ENCODE measurements at regions of chr19 and their contacts with region 1.

Region 1: GRCh38 chr19:56333505-56333904 is 18.9 kb upstream of the ZSCAN5A start:
- DNase-seq: peak; percentile 18
- H3K4me3 ChIP-seq: no peak overlapping the region
- H3K27ac ChIP-seq: no peak overlapping the region
- H3K27me3 ChIP-seq: no peaks in the 10 kb centered on the region
- CTCF ChIP-seq: peak; percentile 83

Region 2: DNA sequence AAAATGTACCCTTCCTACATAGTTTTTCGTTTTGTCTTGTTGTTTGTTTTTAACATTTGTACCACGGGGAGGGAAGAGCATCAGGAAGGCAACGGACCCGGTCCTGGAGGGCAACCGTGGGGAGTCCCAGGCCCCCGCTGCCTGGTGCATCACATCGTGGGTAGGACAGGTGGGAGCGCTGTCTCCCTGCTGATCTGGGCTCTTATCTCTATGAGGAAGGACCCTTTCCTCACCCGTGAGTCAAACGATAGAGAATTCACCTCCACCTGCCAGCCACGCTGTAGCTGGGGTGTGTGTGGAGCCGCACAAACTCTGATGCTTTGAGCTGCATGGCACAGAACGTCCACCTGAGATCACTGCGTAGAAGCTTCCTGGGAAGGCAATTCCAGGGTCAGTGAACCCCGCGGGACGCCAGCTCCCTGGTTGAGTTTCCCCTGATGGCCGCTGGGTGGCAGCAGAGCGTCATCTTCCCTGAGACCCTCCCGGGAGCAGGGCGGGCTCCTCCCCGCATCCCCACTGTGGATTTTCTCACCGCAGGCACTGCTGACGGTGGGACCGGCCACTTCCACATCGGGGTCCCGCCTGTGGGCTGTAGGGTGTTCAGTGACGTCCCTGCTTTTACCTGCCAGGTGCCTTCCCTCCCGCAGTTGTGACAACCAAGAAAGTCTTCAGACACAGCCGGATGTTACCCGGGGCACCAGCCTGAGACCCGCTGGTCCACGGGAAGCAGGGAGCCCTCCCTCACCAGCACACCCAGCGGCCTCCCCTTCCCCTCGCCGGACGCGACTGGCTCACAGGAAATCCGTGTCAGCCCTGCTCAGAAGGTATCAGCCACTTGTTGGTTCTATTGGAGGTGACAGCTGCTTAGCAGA is 267.1 kb before region 1 on chr19:
- CTCF ChIA-PET with region 1: interaction called, 151 read pairs
- POLR2A ChIA-PET with region 1: no interaction called
- DNase-seq: peak; percentile 4
- H3K4me3 ChIP-seq: peak overlapping the region; percentile 39
- H3K27ac ChIP-seq: no peak overlapping the region
- H3K27me3 ChIP-seq: no peaks in the 10 kb centered on the region
- CTCF ChIP-seq: peak; percentile 83

Region 3: GRCh38 chr19:56170261-56170660 is 163.2 kb before region 1 on chr19:
- CTCF ChIA-PET with region 1: interaction called, 12 read pairs
- POLR2A ChIA-PET with region 1: no interaction called
- DNase-seq: no peak
- H3K4me3 ChIP-seq: no peak overlapping the region
- H3K27ac ChIP-seq: no peak overlapping the region
- H3K27me3 ChIP-seq: peaks cover 3% of the 10 kb centered on the region
- CTCF ChIP-seq: no peak

Region 4: DNA sequence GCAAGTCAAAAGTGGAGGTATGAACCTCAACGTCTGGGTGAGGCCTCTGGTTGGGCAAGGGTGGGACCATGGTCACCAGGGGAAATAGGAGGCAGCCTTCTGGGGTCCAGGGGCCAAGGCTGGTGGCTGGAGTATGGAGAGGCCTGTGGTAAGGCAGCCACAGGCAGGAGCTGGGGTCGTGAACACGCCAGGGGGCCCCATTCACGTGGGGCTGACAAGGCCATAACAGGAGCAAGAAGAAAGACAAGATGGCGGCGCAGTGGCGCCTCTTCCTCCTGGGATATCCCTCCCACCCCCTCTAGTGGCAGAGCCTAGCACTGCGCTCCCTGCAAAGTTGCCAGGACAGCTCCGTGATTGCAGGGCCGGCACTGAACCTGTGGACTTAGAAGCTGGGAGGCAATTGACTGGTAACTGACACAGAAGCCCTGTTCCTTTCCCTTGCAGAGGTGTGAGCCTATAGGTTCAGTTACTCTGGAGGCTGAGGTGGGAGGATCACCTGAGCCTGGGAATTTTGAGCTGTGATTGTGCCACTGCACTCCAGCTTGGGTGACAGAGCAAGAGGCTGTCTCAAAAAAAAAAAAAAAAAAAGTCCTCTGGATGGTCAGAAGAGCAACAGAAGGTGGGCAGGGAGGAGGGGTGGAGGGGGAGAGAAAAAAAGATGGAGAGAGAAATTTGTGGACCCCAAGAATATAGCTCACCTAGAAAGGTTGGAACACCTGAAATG is 80.6 kb before region 1 on chr19:
- CTCF ChIA-PET with region 1: interaction called, 396 read pairs
- POLR2A ChIA-PET with region 1: interaction called, 5 read pairs
- DNase-seq: peak; percentile 33
- H3K4me3 ChIP-seq: no peak overlapping the region
- H3K27ac ChIP-seq: no peak overlapping the region
- H3K27me3 ChIP-seq: no peaks in the 10 kb centered on the region
- CTCF ChIP-seq: peak; percentile 86

Region 5: GRCh38 chr19:56273563-56274117 is 59.9 kb before region 1 on chr19:
- CTCF ChIA-PET with region 1: interaction called, 19 read pairs
- POLR2A ChIA-PET with region 1: no interaction called
- DNase-seq: no peak
- H3K4me3 ChIP-seq: no peak overlapping the region
- H3K27ac ChIP-seq: no peak overlapping the region
- H3K27me3 ChIP-seq: no peaks in the 10 kb centered on the region
- CTCF ChIP-seq: no peak

Region 6: GRCh38 chr19:56350416-56351045 is 17.0 kb after region 1 on chr19:
- CTCF ChIA-PET with region 1: interaction called, 36 read pairs
- POLR2A ChIA-PET with region 1: no interaction called
- DNase-seq: peak; percentile 3
- H3K4me3 ChIP-seq: no peak overlapping the region
- H3K27ac ChIP-seq: no peak overlapping the region
- H3K27me3 ChIP-seq: no peaks in the 10 kb centered on the region
- CTCF ChIP-seq: peak; percentile 93

Region 7: DNA sequence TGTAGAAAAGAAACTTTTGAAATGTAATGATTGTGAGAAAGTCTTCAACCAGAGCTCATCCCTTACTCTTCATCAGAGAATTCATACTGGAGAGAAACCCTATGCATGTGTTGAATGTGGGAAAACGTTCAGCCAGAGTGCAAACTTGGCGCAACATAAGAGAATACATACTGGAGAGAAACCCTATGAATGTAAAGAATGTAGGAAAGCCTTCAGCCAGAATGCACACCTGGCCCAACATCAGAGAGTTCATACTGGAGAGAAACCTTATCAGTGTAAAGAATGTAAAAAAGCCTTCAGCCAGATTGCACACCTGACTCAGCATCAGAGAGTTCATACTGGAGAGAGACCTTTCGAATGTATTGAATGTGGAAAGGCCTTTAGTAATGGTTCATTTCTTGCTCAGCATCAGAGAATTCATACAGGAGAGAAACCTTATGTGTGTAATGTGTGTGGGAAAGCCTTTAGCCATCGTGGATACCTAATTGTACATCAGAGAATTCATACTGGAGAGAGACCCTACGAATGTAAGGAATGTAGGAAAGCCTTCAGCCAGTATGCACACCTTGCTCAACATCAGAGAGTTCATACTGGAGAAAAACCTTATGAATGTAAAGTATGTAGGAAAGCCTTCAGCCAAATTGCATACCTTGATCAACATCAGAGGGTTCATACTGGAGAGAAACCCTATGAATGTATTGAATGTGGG is 89.9 kb after region 1 on chr19:
- CTCF ChIA-PET with region 1: no interaction called
- POLR2A ChIA-PET with region 1: no interaction called
- DNase-seq: no peak
- H3K4me3 ChIP-seq: no peak overlapping the region
- H3K27ac ChIP-seq: no peak overlapping the region
- H3K27me3 ChIP-seq: no peaks in the 10 kb centered on the region
- CTCF ChIP-seq: no peak

Region 8: GRCh38 chr19:56477429-56478338 is 144.2 kb after region 1 on chr19:
- CTCF ChIA-PET with region 1: no interaction called
- POLR2A ChIA-PET with region 1: no interaction called
- DNase-seq: peak; percentile 74
- H3K4me3 ChIP-seq: peak overlapping the region; percentile 84
- H3K27ac ChIP-seq: peak overlapping the region; percentile 78
- H3K27me3 ChIP-seq: no peaks in the 10 kb centered on the region
- CTCF ChIP-seq: no peak